Psoas muscle (tissue), 8 donors: ENCODE measurements at regions of chr15 and their contacts with region 1.

Region 1: DNA sequence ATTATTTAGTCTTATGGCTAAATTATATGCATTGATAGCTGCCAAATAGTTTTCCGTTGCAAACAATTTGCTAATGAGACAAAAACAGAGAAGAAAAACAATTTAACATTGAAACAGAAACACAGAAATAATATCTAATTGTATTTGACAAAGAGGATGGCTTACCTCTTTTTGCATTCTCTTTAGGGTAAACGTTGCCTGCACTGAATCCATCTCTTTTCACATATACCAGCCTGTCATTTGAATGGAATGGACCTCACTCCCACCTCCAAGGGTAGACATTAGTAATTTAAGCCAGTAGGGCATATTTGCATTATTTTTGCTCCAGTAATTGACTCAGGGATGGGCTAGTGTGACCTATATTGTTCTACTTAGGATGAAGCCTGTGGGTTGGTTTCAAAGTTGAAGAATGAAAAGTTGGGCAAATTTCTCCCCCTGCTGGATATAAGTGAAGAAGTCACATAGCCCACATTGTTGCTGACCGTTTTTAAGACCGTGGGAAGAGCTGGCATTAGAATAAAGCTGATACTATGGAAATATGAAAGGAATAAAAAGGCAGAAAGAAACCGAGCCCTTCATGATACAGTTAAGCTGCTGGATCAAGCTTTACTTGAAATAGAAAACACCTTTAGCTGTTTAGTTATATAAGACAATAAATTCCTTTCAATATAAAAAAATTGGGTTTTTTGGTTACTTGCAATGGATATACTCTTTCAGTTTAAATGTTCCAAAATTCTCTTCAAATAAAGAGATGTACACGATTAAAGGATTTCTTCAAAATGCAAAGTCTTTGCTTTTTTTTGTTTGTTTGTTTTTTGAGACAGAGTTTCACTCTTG is 26.9 kb downstream of the PIERCE2 start:
- DNase-seq: no peak
- ATAC-seq: peak in 2 of 4 donors; percentile 49 to 74
- H3K4me3 ChIP-seq: no peak overlapping the region
- H3K27ac ChIP-seq: no peak overlapping the region
- H3K4me1 ChIP-seq: no peaks in the 10 kb centered on the region
- H3K27me3 ChIP-seq: no peaks in the 10 kb centered on the region
- CTCF ChIP-seq: peak; percentile 38

Region 2: GRCh38 chr15:55221090-55222011 is 213.9 kb before region 1 on chr15:
- intact Hi-C with region 1: loop called (anchors 5 kb)
- DNase-seq: no peak
- ATAC-seq: peak in 2 of 4 donors; percentile 42 to 48
- H3K4me3 ChIP-seq: no peak overlapping the region
- H3K27ac ChIP-seq: no peak overlapping the region
- H3K4me1 ChIP-seq: no peaks in the 10 kb centered on the region
- H3K27me3 ChIP-seq: no peaks in the 10 kb centered on the region
- CTCF ChIP-seq: no peak

Region 3: GRCh38 chr15:55318588-55319494 is 116.4 kb before region 1 on chr15 and contains the starts of genes PIGB and PIGBOS1:
- intact Hi-C with region 1: loop called in 1 of 2 experiments (anchors 10 kb)
- DNase-seq: peak; percentile 80 to 90
- ATAC-seq: peak; percentile 89 to 98 (median 95)
- H3K4me3 ChIP-seq: peak within 1 kb of the TSS; percentile 91
- H3K27ac ChIP-seq: peak within 1 kb of the TSS; percentile 87
- H3K4me1 ChIP-seq: peaks cover 8% of the 10 kb centered on the region
- H3K27me3 ChIP-seq: no peaks in the 10 kb centered on the region
- CTCF ChIP-seq: peak; percentile 12
- total RNA-seq, gene PIGB: 1.0 to 1.8 (median 1.2) TPM
- total RNA-seq, gene PIGBOS1: 3.5 to 7.6 (median 6.1) TPM

Region 4: GRCh38 chr15:55344206-55344605 is 91.0 kb before region 1 on chr15:
- intact Hi-C with region 1: loop called in 1 of 2 experiments (anchors 10 kb)
- DNase-seq: no peak
- ATAC-seq: peak in 1 of 4 donors; percentile 10
- H3K4me3 ChIP-seq: no peak overlapping the region
- H3K27ac ChIP-seq: no peak overlapping the region
- H3K4me1 ChIP-seq: no peaks in the 10 kb centered on the region
- H3K27me3 ChIP-seq: no peaks in the 10 kb centered on the region
- CTCF ChIP-seq: no peak

Region 5: GRCh38 chr15:55494931-55495330 is 59.7 kb after region 1 on chr15:
- intact Hi-C with region 1: loop called in 1 of 2 experiments (anchors 10 kb)
- DNase-seq: no peak
- ATAC-seq: no peak
- H3K4me3 ChIP-seq: no peak overlapping the region
- H3K27ac ChIP-seq: no peak overlapping the region
- H3K4me1 ChIP-seq: no peaks in the 10 kb centered on the region
- H3K27me3 ChIP-seq: no peaks in the 10 kb centered on the region
- CTCF ChIP-seq: no peak